ENCODE measurements at regions of chr5 and their contacts with region 1.

Region 1: GRCh38 chr5:99109900-99110299 is 181.1 kb upstream of the CHD1 start:
- DNase-seq: no peak
- ATAC-seq: no peak
- H3K4me3 ChIP-seq: no peak overlapping the region
- H3K4me3 Mint-ChIP-seq: no peak overlapping the region
- H3K27ac ChIP-seq: no peak overlapping the region
- H3K27ac Mint-ChIP-seq: no peak overlapping the region
- H3K4me1 ChIP-seq: no peaks in the 10 kb centered on the region
- H3K4me1 Mint-ChIP-seq: no peaks in the 10 kb centered on the region
- H3K27me3 ChIP-seq: peaks cover 2% of the 10 kb centered on the region
- H3K27me3 Mint-ChIP-seq: peaks cover 0 to 6% of the 10 kb centered on the region in 2 donors
- CTCF ChIP-seq: no peak

Region 2: GRCh38 chr5:99076723-99077640 is 32.9 kb before region 1 on chr5:
- intact Hi-C with region 1: loop called (anchors 1 kb)
- DNase-seq: no peak
- ATAC-seq: no peak
- H3K4me3 ChIP-seq: no peak overlapping the region
- H3K4me3 Mint-ChIP-seq: no peak overlapping the region
- H3K27ac ChIP-seq: no peak overlapping the region
- H3K27ac Mint-ChIP-seq: no peak overlapping the region
- H3K4me1 ChIP-seq: no peaks in the 10 kb centered on the region
- H3K4me1 Mint-ChIP-seq: no peaks in the 10 kb centered on the region
- H3K27me3 ChIP-seq: peaks cover 2% of the 10 kb centered on the region
- H3K27me3 Mint-ChIP-seq: peaks cover 5 to 23% of the 10 kb centered on the region in 2 donors
- CTCF ChIP-seq: no peak